OCI-LY7 (cell line): ENCODE measurements at regions of chr11 and their contacts with region 1.

Region 1: GRCh38 chr11:59550368-59550841 is 39.1 kb downstream of the OR4D9 start:
- DNase-seq: peak; percentile 95
- H3K4me3 ChIP-seq: peak overlapping the region; percentile 72
- H3K27ac ChIP-seq: peak overlapping the region; percentile 91
- H3K4me1 ChIP-seq: peaks cover 24% of the 10 kb centered on the region
- CTCF ChIP-seq: peak; percentile 65

Region 2: DNA sequence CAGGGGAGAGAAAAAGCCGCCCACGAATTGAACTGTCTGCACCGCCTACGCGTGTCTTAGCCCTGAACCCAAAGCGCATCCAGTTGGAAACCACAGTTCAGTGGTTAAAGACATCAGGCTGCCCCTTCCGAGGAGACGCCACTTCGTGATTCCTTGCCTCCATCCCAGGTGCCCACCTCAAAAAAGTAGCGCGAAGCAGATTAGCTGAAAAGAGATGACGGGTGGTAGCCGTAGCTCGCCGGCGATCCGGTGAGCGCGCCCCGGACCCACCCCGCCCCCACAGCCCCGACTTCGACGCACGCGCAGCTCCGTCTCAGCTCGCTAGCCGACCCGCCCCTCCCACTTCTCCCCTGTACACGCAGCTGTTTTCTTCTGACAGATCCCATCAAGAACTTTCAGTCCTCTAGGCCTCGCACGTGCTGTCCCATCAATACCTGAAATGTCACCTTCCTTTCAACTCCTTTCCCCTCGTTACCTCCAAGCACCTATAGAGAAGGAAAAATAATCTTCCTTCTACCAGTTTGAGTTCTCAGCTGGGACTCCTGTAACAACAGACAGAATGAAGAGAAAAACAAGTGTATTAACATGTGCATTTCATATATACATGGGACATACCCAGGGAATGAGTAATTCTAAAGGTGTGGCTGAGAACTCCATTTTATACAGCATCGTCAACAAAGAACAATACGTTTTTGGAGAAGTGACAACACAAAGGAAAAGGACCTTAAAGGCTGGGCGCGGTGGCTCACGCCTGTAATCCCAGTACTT is 10.5 kb after region 1 on chr11:
- CTCF ChIA-PET with region 1: interaction called, 8 read pairs
- POLR2A ChIA-PET with region 1: interaction called, 8 read pairs
- intact Hi-C with region 1: loop called (anchors 1 kb)
- DNase-seq: peak; percentile 88
- H3K4me3 ChIP-seq: peak overlapping the region; percentile 92
- H3K27ac ChIP-seq: peak overlapping the region; percentile 66
- H3K4me1 ChIP-seq: peaks cover 36% of the 10 kb centered on the region
- CTCF ChIP-seq: no peak

Region 3: GRCh38 chr11:59668950-59669610 is 118.7 kb after region 1 on chr11 and contains the start of gene PATL1:
- CTCF ChIA-PET with region 1: no interaction called
- POLR2A ChIA-PET with region 1: interaction called, 14 read pairs
- intact Hi-C with region 1: loop called (anchors 2 kb)
- DNase-seq: peak; percentile 98
- H3K4me3 ChIP-seq: peak within 1 kb of the TSS; percentile 99
- H3K27ac ChIP-seq: peak within 1 kb of the TSS; percentile 47
- H3K4me1 ChIP-seq: peaks cover 19% of the 10 kb centered on the region
- CTCF ChIP-seq: no peak
- total RNA-seq, gene PATL1: 14.7 and 15.2 TPM in 2 replicates